A673 (cell line): ENCODE measurements at regions of chr22 and their contacts with region 1.

Region 1: GRCh38 chr22:50544078-50544745 is 1.5 kb upstream of the KLHDC7B start:
- DNase-seq: peak; percentile 83
- H3K4me3 ChIP-seq: peak overlapping the region; percentile 18
- H3K27ac ChIP-seq: no peak overlapping the region
- H3K4me1 ChIP-seq: peaks cover 28% of the 10 kb centered on the region
- H3K27me3 ChIP-seq: no peaks in the 10 kb centered on the region
- CTCF ChIP-seq: peak; percentile 75

Region 2: GRCh38 chr22:49760630-49761571 is 783.3 kb before region 1 on chr22:
- CTCF ChIA-PET with region 1: no interaction called
- POLR2A ChIA-PET with region 1: no interaction called
- intact Hi-C with region 1: no loop called
- DNase-seq: no peak
- H3K4me3 ChIP-seq: no peak overlapping the region
- H3K27ac ChIP-seq: no peak overlapping the region
- H3K4me1 ChIP-seq: peaks cover 6% of the 10 kb centered on the region
- H3K27me3 ChIP-seq: no peaks in the 10 kb centered on the region
- CTCF ChIP-seq: no peak

Region 3: DNA sequence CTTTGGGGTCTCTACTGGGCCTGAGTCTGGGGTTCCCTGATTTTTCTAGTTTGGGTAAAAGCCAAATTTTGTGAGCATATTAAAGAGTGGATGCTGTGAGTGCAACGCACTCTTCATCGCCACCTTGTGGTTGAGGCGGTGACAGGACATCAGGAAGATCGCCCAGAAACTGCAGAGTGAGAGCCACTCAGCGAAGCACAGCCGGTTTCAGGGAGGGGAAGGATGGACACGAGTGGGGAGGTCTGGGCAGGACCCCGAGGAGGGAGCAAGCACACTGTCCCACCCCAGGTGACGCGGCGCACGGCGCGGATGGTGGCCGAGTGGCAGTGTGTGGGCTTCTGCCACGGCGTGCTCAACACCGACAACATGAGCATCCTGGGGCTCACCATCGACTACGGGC is 334.3 kb before region 1 on chr22:
- CTCF ChIA-PET with region 1: no interaction called
- POLR2A ChIA-PET with region 1: no interaction called
- intact Hi-C with region 1: no loop called
- DNase-seq: peak; percentile 77
- H3K4me3 ChIP-seq: no peak overlapping the region
- H3K27ac ChIP-seq: no peak overlapping the region
- H3K4me1 ChIP-seq: no peaks in the 10 kb centered on the region
- H3K27me3 ChIP-seq: no peaks in the 10 kb centered on the region
- CTCF ChIP-seq: peak; percentile 92

Region 4: DNA sequence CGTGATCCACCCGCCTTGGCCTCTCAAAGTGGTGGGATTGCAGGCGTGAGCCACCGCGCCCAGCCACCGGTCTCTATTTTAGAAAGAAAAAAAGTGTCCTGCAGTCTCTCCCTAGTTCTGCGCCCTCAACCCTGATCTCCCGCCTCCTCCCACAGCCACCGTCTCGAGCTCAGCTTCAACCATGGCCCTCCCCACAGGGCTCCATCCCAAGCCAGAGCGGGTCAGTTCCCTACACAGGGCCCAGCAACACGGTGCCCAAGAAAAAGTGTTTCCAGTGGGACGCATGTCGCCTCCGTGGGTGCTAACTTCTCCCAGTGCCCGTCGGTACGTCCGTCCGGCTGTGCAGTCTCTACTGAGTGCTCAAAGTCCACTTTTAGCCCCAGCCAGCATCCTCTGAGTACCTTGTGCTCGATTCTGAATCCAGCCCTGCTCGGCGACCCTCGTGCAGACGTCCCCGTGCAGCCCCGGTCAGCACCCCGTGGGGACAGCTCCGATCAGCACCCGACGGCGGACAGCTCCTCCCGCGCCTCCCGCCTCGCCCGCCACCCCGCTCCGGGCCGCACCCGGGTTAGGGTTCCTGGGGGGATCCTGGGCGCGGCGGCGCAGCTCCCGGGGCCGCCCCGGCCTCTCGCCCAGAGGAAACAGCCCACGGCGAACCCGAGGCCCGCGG is 55.7 kb after region 1 on chr22:
- CTCF ChIA-PET with region 1: no interaction called
- POLR2A ChIA-PET with region 1: no interaction called
- intact Hi-C with region 1: loop called (anchors 10 kb)
- DNase-seq: peak; percentile 48
- H3K4me3 ChIP-seq: peak overlapping the region; percentile 34
- H3K27ac ChIP-seq: no peak overlapping the region
- H3K4me1 ChIP-seq: no peaks in the 10 kb centered on the region
- H3K27me3 ChIP-seq: no peaks in the 10 kb centered on the region
- CTCF ChIP-seq: no peak